ENCODE measurements at regions of chr18 and their contacts with region 1.

Region 1: GRCh38 chr18:49021433-49022129 is 70.8 kb upstream of the SMAD7 start:
- DNase-seq: peak in 1 of 9 donors; percentile 52
- ATAC-seq: peak; percentile 60
- H3K4me3 ChIP-seq: no peak overlapping the region
- H3K4me3 Mint-ChIP-seq: no peak overlapping the region
- H3K27ac ChIP-seq: no peak overlapping the region
- H3K27ac Mint-ChIP-seq: no peak overlapping the region
- H3K4me1 ChIP-seq: no peaks in the 10 kb centered on the region
- H3K4me1 Mint-ChIP-seq: peaks cover 0 to 11% (median 0%) of the 10 kb centered on the region in 7 donors
- H3K27me3 ChIP-seq: no peaks in the 10 kb centered on the region
- H3K27me3 Mint-ChIP-seq: no peaks in the 10 kb centered on the region

Region 2: GRCh38 chr18:49238433-49239042 is 217.0 kb after region 1 on chr18:
- CTCF ChIA-PET with region 1: no interaction called
- POLR2A ChIA-PET with region 1: no interaction called
- intact Hi-C with region 1: loop called in 1 of 2 experiments (anchors 1 kb)
- DNase-seq: peak in 1 of 9 donors; percentile 2
- ATAC-seq: peak; percentile 29
- H3K4me3 ChIP-seq: no peak overlapping the region
- H3K4me3 Mint-ChIP-seq: no peak overlapping the region
- H3K27ac ChIP-seq: no peak overlapping the region
- H3K27ac Mint-ChIP-seq: no peak overlapping the region
- H3K4me1 ChIP-seq: no peaks in the 10 kb centered on the region
- H3K4me1 Mint-ChIP-seq: peaks cover 0 to 3% (median under 1%) of the 10 kb centered on the region in 7 donors
- H3K27me3 ChIP-seq: no peaks in the 10 kb centered on the region
- H3K27me3 Mint-ChIP-seq: no peaks in the 10 kb centered on the region

Region 3: DNA sequence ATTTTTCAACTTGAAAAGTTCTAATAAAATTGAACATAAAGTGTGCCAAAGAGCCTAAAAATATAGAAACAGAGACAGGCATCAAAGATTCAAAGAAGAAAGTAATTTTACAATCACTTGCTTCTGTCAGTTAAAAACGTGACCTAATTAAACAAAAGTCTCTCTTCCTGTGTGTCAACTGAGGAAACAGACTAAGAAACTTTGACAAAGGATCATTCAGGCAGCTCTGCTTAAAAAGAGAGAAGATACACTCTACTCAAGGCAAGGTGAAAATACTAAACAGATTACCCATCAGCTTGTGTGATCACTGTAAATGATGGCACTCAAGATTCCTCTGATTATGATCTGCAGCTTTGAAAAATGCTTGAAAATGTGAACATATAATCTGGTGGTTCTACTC is 391.1 kb after region 1 on chr18:
- CTCF ChIA-PET with region 1: no interaction called
- POLR2A ChIA-PET with region 1: no interaction called
- intact Hi-C with region 1: loop called in 1 of 2 experiments (anchors 1 kb)
- DNase-seq: peak in 3 of 9 donors; percentile 15 to 31 (median 21)
- ATAC-seq: no peak
- H3K4me3 ChIP-seq: no peak overlapping the region
- H3K4me3 Mint-ChIP-seq: peak overlapping the region in 8 of 10 donors; percentile 1 to 61 (median 38)
- H3K27ac ChIP-seq: no peak overlapping the region
- H3K27ac Mint-ChIP-seq: peak overlapping the region; percentile 13 to 83 (median 77)
- H3K4me1 ChIP-seq: peaks cover 0 to 16% of the 10 kb centered on the region in 2 donors
- H3K4me1 Mint-ChIP-seq: peaks cover 13 to 51% (median 47%) of the 10 kb centered on the region in 7 donors
- H3K27me3 ChIP-seq: no peaks in the 10 kb centered on the region
- H3K27me3 Mint-ChIP-seq: no peaks in the 10 kb centered on the region